AG04449 (cell line): ENCODE measurements at regions of chr12 and their contacts with region 1.

Region 1: GRCh38 chr12:78470354-78471195 is 394.0 kb upstream of the SYT1 start:
- DNase-seq: peak; percentile 9
- H3K4me3 ChIP-seq: no peak overlapping the region
- CTCF ChIP-seq: peak; percentile 55

Region 2: GRCh38 chr12:78430551-78430950 is 40.0 kb before region 1 on chr12:
- CTCF ChIA-PET with region 1: no interaction called
- POLR2A ChIA-PET with region 1: no interaction called
- DNase-seq: no peak
- H3K4me3 ChIP-seq: no peak overlapping the region
- CTCF ChIP-seq: no peak

Region 3: GRCh38 chr12:79006306-79006705 is 535.7 kb after region 1 on chr12:
- CTCF ChIA-PET with region 1: interaction called, 43 read pairs
- POLR2A ChIA-PET with region 1: no interaction called
- DNase-seq: no peak
- H3K4me3 ChIP-seq: no peak overlapping the region
- CTCF ChIP-seq: peak; percentile 17

Region 4: DNA sequence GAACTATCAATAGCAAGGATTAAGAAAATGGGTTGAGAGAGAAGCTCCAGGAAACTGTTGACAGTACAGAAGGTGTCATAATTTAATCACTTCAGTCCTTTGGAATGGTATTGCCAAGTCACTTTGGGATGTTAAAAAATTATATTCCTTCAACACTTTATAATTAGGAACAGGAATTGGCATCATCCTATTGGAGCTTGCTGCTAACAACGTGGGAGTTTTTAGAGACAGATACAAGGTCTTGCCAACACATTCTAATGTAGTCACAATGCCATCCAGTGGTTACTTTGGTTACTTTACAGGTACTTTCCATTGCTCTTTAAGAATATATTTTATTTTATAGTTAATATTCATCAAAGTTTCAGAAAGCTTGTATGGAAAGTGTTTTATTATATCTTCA is 704.1 kb after region 1 on chr12:
- CTCF ChIA-PET with region 1: interaction called, 21 read pairs
- POLR2A ChIA-PET with region 1: no interaction called
- DNase-seq: no peak
- H3K4me3 ChIP-seq: no peak overlapping the region
- CTCF ChIP-seq: peak; percentile 11

Region 5: GRCh38 chr12:79373896-79374499 is 903.4 kb after region 1 on chr12:
- CTCF ChIA-PET with region 1: interaction called, 14 read pairs
- POLR2A ChIA-PET with region 1: no interaction called
- DNase-seq: no peak
- H3K4me3 ChIP-seq: no peak overlapping the region
- CTCF ChIP-seq: peak; percentile 76